MCF 10A (cell line): ENCODE measurements at regions of chr9 and their contacts with region 1.

Region 1: DNA sequence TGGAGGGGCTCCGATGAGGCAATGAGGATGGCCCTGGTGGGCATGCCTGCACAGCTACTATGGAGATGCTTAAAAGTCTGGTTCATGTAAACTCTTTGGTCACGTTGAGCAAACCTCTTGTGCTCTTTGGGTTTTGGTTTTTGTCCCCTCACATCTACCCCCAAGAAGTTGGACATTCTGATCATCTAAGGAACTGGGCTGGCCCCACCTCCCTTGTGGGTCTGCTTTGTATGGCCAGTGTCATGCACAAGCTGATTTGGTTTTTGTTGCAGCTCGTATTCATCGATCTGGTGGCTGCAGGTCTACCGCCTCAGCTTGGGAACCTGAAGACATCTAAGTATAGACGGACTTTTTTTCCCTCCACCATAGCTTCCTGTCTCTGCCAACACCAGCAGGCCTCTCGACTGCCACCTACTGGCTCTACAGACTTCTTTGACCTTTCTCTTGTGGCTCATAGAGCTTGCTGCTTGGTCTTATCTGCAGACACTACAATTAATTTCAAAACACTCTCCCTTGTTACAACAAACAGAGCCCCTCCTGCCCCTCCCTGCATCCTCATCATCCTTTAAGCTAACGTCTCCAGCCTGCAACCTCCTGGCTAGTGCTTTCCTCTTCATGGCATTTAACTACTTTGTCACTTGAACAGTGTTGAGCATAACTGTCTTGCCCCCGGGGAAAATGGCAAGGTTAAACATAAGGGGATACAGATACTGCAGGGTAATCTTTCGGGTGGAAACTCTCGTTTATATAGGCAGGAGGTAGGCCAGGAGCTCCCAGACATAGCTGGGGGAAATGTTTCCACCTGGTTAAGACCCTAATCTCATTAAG is 34.5 kb downstream of the TSTD2 start:
- DNase-seq: peak; percentile 80
- H3K4me3 Mint-ChIP-seq: no peak overlapping the region
- H3K27ac Mint-ChIP-seq: no peak overlapping the region
- H3K4me1 Mint-ChIP-seq: peaks cover 9% of the 10 kb centered on the region
- H3K27me3 Mint-ChIP-seq: no peaks in the 10 kb centered on the region
- CTCF ChIP-seq: peak; percentile 77

Region 2: GRCh38 chr9:96854073-96854876 is 744.4 kb before region 1 on chr9 and contains the start of gene ZNF782:
- CTCF ChIA-PET with region 1: interaction called, 6 read pairs
- POLR2A ChIA-PET with region 1: interaction called, 3 read pairs
- intact Hi-C with region 1: loop called (anchors 1 kb)
- DNase-seq: peak; percentile 96
- H3K4me3 Mint-ChIP-seq: peak within 1 kb of the TSS; percentile 87
- H3K27ac Mint-ChIP-seq: peak within 1 kb of the TSS; percentile 94
- H3K4me1 Mint-ChIP-seq: peaks cover 25% of the 10 kb centered on the region
- H3K27me3 Mint-ChIP-seq: no peaks in the 10 kb centered on the region
- CTCF ChIP-seq: no peak
- total RNA-seq, gene ZNF782: 5.2 and 6.0 TPM in 2 replicates

Region 3: DNA sequence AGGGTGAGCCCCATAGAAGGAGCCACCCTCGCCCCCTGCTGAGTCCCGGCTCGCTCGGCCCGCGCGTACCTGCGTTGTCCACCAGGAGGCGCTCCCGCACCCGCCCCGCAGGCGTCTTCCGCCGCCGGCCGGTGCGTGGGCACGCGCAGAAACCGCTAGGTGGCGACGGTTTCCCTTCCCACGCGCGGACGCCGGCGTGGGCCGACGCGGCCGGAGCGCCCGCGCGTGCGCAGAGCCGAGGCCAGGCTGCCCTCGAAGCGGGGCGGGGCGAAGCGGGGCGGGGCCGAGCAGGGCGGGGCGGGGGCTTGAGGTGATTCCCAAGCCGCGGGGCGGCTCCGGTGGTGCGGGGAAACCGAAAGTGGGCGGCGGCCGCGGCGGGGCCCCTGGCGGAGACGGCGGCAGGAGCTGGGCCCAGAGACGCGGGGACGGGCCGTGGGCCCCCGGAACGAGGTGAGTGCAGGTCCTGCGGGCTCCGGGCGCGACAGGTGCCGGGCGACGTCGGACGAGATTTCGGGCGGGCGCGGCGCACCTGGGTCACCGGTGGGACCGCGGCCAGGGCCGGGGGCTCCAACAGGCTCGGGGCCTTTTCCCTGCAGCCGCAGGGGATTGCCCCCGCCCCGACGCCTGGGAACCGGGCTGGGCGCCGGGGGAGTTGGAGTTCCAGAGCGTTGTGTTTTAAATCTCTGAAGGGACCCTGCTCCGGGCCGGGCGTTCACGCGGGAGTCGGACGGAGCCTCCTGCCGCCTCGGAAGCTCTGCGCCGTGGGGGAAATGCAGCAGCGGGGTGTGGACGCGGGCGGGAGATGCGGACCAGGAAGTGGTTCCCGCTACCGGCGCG is 186.7 kb before region 1 on chr9 and contains the start of gene TDRD7:
- CTCF ChIA-PET with region 1: interaction called, 8 read pairs
- POLR2A ChIA-PET with region 1: no interaction called
- intact Hi-C with region 1: loop called (anchors 1 kb)
- DNase-seq: peak; percentile 75
- H3K4me3 Mint-ChIP-seq: peak within 1 kb of the TSS; percentile 75
- H3K27ac Mint-ChIP-seq: peak within 1 kb of the TSS; percentile 81
- H3K4me1 Mint-ChIP-seq: peaks cover 12% of the 10 kb centered on the region
- H3K27me3 Mint-ChIP-seq: peaks cover 27% of the 10 kb centered on the region
- CTCF ChIP-seq: peak; percentile 96
- total RNA-seq, gene TDRD7: 7.1 and 8.2 TPM in 2 replicates

Region 4: GRCh38 chr9:97468658-97469448 is 129.8 kb before region 1 on chr9:
- CTCF ChIA-PET with region 1: interaction called, 345 read pairs
- POLR2A ChIA-PET with region 1: interaction called, 34 read pairs
- intact Hi-C with region 1: loop called (anchors 1 kb)
- DNase-seq: peak; percentile 70
- H3K4me3 Mint-ChIP-seq: no peak overlapping the region
- H3K27ac Mint-ChIP-seq: no peak overlapping the region
- H3K4me1 Mint-ChIP-seq: no peaks in the 10 kb centered on the region
- H3K27me3 Mint-ChIP-seq: no peaks in the 10 kb centered on the region
- CTCF ChIP-seq: peak; percentile 74

Region 5: DNA sequence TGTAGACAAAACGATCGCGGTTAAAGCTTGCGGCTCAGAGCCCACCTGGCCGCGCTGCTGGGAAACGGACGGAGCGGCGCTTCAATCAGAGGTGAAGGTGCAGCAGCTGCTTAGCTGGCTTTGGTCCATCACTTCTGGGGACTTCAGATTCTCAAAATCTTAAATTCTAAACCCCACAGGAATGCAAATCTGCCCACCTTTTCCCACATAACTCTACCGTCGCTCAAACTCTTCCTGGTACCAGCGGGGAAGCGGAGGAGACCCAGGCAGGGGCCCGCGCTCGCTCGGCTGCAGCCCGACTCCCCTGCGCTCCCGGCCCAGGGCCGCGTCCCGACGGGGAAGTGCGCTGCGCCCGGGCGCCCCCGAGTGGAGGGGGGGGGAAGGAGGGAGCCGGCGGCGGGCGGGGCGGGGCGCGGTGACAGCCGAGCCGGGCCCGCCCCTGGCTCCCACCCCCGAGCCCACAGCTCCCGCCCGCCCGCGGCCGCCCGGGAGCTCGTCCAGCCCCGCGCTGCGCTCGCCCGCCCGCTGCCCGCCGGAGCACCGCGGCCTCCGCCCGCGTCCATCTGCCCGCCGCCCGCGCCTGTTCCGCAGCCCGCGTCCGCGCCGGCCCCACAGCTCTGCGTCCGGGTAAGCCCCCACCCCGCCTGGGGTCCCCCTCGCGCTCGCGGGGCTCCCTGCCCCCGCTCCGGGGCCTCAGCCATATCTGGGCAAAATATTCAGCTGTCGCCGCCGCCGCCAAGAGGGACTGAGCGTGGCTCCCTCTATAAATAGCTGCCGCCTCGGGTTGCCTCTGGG is 97.3 kb before region 1 on chr9 and contains the start of gene TMOD1:
- CTCF ChIA-PET with region 1: interaction called, 8 read pairs
- POLR2A ChIA-PET with region 1: no interaction called
- intact Hi-C with region 1: loop called (anchors 1 kb)
- DNase-seq: peak; percentile 60
- H3K4me3 Mint-ChIP-seq: peak within 1 kb of the TSS; percentile 63
- H3K27ac Mint-ChIP-seq: no peak within 1 kb of the TSS
- H3K4me1 Mint-ChIP-seq: no peaks in the 10 kb centered on the region
- H3K27me3 Mint-ChIP-seq: peaks cover 19% of the 10 kb centered on the region
- CTCF ChIP-seq: peak; percentile 14
- total RNA-seq, gene TMOD1: 0.26 TPM in 1 of 2 replicates, not detected in the other

Region 6: GRCh38 chr9:97578856-97579255 is 19.8 kb before region 1 on chr9:
- CTCF ChIA-PET with region 1: interaction called, 12 read pairs
- POLR2A ChIA-PET with region 1: no interaction called
- intact Hi-C with region 1: no loop called
- DNase-seq: no peak
- H3K4me3 Mint-ChIP-seq: no peak overlapping the region
- H3K27ac Mint-ChIP-seq: no peak overlapping the region
- H3K4me1 Mint-ChIP-seq: no peaks in the 10 kb centered on the region
- H3K27me3 Mint-ChIP-seq: peaks cover 13% of the 10 kb centered on the region
- CTCF ChIP-seq: no peak

Region 7: DNA sequence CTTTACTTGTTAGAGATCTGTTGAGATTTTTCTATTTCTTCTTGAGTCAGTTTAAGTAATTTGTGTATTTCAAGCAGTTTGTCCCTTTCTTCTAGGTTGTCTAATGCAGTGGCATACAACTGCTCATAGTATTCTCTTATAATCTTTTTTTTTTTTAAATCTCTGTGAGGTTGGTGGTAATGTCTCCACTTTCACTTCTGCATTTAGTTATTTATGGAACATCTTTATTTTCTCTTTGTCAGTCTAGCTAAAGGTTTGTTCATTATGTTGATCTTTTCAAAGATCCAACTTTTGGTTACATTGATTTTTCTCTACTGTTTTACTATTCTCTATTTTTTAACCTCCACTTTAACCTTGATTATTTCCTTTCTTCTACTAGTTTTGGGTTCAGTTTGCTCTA is 268.2 kb after region 1 on chr9:
- CTCF ChIA-PET with region 1: no interaction called
- POLR2A ChIA-PET with region 1: no interaction called
- intact Hi-C with region 1: no loop called
- DNase-seq: no peak
- H3K4me3 Mint-ChIP-seq: no peak overlapping the region
- H3K27ac Mint-ChIP-seq: no peak overlapping the region
- H3K4me1 Mint-ChIP-seq: no peaks in the 10 kb centered on the region
- H3K27me3 Mint-ChIP-seq: no peaks in the 10 kb centered on the region
- CTCF ChIP-seq: no peak